Mammary epithelial cell (primary cell): ENCODE measurements at regions of chr2 and their contacts with region 1.

Region 1: GRCh38 chr2:216633616-216634369 is 573 bp downstream of the IGFBP2 start:
- DNase-seq: peak; percentile 42
- H3K4me3 ChIP-seq: peak overlapping the region; percentile 71 to 93 (median 77)
- H3K27ac ChIP-seq: peak overlapping the region; percentile 61
- H3K4me1 ChIP-seq: peaks cover 21% of the 10 kb centered on the region
- H3K27me3 ChIP-seq: no peaks in the 10 kb centered on the region
- CTCF ChIP-seq: no peak

Region 2: GRCh38 chr2:216533609-216534008 is 100.2 kb before region 1 on chr2:
- CTCF ChIA-PET with region 1: no interaction called
- dilution Hi-C with region 1: no loop called
- in situ Hi-C with region 1: no loop called
- intact Hi-C with region 1: loop called (anchors 1 kb)
- DNase-seq: peak; percentile 79
- H3K4me3 ChIP-seq: peak overlapping the region in 2 of 3 experiments; percentile 9 to 35
- H3K27ac ChIP-seq: peak overlapping the region; percentile 19
- H3K4me1 ChIP-seq: peaks cover 44% of the 10 kb centered on the region
- H3K27me3 ChIP-seq: no peaks in the 10 kb centered on the region
- CTCF ChIP-seq: no peak

Region 3: DNA sequence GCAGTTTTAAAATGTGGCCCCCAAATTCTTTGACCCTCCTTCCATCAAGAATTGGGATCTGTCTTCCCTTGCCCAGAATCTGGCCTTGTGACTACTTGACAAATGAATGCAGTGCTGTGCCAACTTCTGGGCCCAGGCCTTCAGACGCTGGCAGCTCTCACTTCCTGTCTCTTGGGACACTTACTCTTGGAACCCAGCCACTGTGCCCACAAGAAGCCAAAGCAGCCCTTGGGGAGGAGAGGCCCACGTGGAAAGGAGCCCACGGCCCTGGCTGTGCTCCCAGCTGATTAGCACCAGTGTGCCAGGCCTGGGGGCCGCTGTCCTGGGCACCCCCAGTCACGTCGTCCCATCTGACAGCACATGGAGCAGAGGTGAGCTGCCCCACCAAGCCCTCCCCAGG is 78.5 kb before region 1 on chr2:
- CTCF ChIA-PET with region 1: no interaction called
- dilution Hi-C with region 1: no loop called
- in situ Hi-C with region 1: no loop called
- intact Hi-C with region 1: no loop called
- DNase-seq: peak; percentile 53
- H3K4me3 ChIP-seq: no peak overlapping the region
- H3K27ac ChIP-seq: peak overlapping the region; percentile 1
- H3K4me1 ChIP-seq: peaks cover 51% of the 10 kb centered on the region
- H3K27me3 ChIP-seq: no peaks in the 10 kb centered on the region
- CTCF ChIP-seq: no peak

Region 4: GRCh38 chr2:216643986-216644659 is 10.3 kb after region 1 on chr2:
- CTCF ChIA-PET with region 1: no interaction called
- dilution Hi-C with region 1: no loop called
- in situ Hi-C with region 1: no loop called
- intact Hi-C with region 1: loop called (anchors 1 kb)
- DNase-seq: no peak
- H3K4me3 ChIP-seq: no peak overlapping the region
- H3K27ac ChIP-seq: no peak overlapping the region
- H3K4me1 ChIP-seq: peaks cover 24% of the 10 kb centered on the region
- H3K27me3 ChIP-seq: no peaks in the 10 kb centered on the region
- CTCF ChIP-seq: no peak

Region 5: DNA sequence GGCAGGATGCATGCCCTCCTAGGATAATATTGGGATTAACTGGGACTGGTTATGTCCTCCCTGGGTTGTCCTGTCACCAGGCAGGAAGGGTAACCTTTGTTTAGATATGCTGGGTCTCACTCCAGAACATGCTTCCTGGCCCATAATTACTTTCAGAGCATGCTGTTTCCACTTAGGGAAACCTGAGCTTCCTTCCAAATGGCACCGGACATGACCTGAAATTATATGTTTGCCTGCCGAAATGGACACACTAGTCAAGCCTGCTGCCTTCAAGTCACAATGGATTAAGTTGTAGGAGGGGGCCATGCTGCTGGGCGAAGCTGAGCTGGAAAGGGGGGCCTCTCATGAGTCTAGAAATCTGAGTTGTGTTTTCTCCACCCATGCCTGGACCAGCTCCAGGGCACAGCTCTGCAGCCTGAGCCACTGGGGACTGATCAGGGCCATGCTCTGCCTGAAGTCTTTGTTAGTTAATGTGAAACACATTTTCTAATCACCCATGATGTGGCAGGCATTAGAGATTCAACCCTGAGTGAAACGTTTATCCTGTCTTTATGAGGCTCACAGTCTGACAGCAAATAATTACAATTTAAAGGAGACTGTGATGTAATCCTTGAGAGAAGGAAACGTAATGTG is 1095.7 kb after region 1 on chr2:
- CTCF ChIA-PET with region 1: no interaction called
- dilution Hi-C with region 1: no loop called
- in situ Hi-C with region 1: no loop called
- intact Hi-C with region 1: no loop called
- DNase-seq: no peak
- H3K4me3 ChIP-seq: no peak overlapping the region
- H3K27ac ChIP-seq: no peak overlapping the region
- H3K4me1 ChIP-seq: no peaks in the 10 kb centered on the region
- H3K27me3 ChIP-seq: no peaks in the 10 kb centered on the region
- CTCF ChIP-seq: no peak